ENCODE measurements at regions of chr2 and their contacts with region 1.

Region 1: DNA sequence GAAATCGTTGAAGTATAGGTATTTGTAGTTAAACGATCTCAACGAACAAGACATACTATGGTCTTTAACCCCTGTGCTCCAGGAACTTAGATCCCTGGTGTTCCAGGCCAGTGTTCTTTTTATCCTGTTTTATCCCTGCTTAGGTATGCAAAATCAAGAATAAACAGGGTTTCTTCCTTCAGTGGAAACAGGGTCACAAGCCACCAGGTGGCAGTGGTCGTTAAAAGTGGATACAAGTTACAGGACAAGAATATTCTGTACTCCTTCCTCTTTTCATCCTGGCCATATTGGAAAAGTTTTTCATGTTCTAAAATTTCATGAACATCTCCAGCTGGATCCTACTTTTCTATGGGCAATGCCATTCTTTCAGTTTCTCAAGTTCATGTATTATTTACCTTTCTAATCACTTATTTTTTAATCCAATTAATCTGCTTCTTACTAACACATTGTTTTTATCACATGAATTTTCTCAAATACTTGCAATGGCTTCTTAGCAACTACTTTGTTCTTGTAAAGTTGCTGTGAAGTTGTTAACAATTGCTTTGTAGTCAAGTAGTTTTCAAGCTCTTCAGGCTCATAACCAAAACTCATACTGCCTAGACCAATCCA is 16.4 kb upstream of the HNMT start:
- DNase-seq: peak; percentile 74
- H3K4me3 ChIP-seq: no peak overlapping the region
- H3K27ac ChIP-seq: no peak overlapping the region
- H3K4me1 ChIP-seq: no peaks in the 10 kb centered on the region
- H3K27me3 ChIP-seq: no peaks in the 10 kb centered on the region
- CTCF ChIP-seq: peak in 3 of 4 experiments; percentile 14 to 53 (median 52)
- EP300 ChIP-seq: no peak
- POLR2A ChIP-seq: no peak

Region 2: GRCh38 chr2:137826373-137827372 is 121.2 kb before region 1 on chr2:
- intact Hi-C with region 1: no loop called
- DNase-seq: no peak
- H3K4me3 ChIP-seq: no peak overlapping the region
- H3K27ac ChIP-seq: no peak overlapping the region
- H3K4me1 ChIP-seq: no peaks in the 10 kb centered on the region
- H3K27me3 ChIP-seq: no peaks in the 10 kb centered on the region
- CTCF ChIP-seq: no peak
- EP300 ChIP-seq: no peak
- POLR2A ChIP-seq: no peak

Region 3: GRCh38 chr2:137937778-137938177 is 10.1 kb before region 1 on chr2:
- intact Hi-C with region 1: no loop called
- DNase-seq: no peak
- H3K4me3 ChIP-seq: no peak overlapping the region
- H3K27ac ChIP-seq: no peak overlapping the region
- H3K4me1 ChIP-seq: no peaks in the 10 kb centered on the region
- H3K27me3 ChIP-seq: no peaks in the 10 kb centered on the region
- CTCF ChIP-seq: no peak
- EP300 ChIP-seq: no peak
- POLR2A ChIP-seq: no peak

Region 4: DNA sequence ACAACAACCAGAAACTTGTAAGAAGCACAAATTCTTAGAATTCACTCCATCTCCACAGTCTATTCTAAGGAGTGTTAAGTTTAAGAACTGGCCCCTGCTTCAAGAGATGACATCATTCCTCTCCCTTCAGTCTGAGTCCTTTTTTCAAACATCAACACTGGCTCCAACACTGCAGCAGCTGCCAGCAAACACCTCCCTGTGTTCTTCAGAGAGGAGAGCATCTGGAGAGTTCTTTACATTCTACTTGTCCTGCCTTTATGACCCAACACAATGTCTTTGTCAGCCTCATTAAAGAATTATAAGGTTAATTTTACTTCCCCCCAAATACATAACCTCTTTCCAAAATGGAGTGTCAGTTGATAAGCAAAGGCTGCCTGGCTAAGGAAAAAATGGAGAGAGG is 138.8 kb after region 1 on chr2:
- intact Hi-C with region 1: loop called (anchors 10 kb)
- DNase-seq: no peak
- H3K4me3 ChIP-seq: no peak overlapping the region
- H3K27ac ChIP-seq: no peak overlapping the region
- H3K4me1 ChIP-seq: peaks cover 0 to 7% (median 2%) of the 10 kb centered on the region in 4 donors
- H3K27me3 ChIP-seq: no peaks in the 10 kb centered on the region
- CTCF ChIP-seq: no peak
- EP300 ChIP-seq: no peak
- POLR2A ChIP-seq: no peak

Region 5: DNA sequence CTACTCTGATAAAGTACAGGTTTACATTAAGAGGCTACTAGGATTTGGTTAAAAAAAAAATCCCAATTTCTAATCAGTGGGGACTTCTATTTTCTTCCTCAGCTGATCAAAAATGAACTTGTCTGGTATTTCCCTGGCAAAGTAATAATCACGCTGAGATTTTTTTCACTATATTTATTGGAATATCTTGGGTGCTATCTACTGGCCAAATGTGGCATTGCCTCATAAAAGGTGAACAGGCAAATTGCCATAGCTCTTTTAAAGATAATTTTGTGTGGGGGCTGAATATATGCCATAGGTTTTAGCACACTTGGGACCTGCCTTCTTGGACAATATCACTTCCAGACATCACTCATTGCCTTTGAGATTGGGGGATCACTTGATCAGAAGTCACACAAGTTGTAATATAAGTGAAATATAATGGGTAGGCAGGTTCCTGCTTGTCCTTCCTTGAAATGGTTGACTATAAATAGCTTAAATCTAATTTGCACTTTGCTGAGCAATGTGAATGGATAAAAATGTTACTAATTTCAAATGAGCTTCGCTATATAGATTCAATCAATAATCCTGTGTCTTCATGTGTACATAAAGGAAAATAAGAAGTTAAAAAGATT is 839.3 kb after region 1 on chr2:
- intact Hi-C with region 1: loop called (anchors 2 kb)
- DNase-seq: no peak
- H3K4me3 ChIP-seq: no peak overlapping the region
- H3K27ac ChIP-seq: no peak overlapping the region
- H3K4me1 ChIP-seq: no peaks in the 10 kb centered on the region
- H3K27me3 ChIP-seq: no peaks in the 10 kb centered on the region
- CTCF ChIP-seq: peak; percentile 10 to 61 (median 54)
- EP300 ChIP-seq: no peak
- POLR2A ChIP-seq: no peak

Measured in sigmoid colon (tissue), 7 donors.